ENCODE measurements at regions of chr18 and their contacts with region 1.

Region 1: DNA sequence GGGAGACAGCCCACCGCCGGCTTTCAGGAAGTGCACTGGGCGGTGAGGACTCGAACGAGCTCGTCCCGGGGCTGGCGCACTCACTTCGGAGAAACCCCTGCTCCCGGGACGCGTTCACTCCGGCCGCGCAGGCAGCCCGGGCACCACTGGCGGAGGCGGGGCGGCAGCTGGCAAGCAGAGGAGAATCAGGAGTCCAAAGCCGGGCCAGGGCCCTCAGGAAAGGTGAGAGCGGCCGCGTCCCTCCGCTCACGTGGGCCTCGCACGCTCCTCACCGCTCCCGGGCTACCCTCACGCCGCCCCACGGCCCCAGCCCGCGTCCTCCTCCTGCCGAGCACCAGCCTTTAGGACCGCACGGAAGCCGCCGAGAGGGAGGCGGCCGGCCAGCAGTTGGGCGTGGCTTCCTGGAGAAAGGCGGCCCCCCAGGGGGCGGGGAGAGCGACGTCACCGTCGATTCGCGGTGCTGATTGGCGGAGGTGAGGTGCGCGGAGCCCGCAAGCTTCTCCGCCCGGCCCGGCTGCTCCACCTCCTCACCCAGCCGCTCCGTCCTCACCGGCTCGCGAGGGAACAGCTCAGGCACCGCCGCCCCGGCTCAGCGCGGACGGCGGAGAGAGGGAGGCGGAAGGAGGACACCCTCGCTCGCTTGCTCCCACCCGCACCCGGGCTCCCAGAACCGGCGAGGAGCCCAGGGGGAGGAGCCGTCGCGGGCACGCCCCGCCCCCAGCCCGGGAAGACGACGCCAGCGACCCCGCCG is at the start of gene ZCCHC2:
- DNase-seq: peak; percentile 100
- H3K4me3 Mint-ChIP-seq: peak within 1 kb of the TSS; percentile 93
- H3K27ac Mint-ChIP-seq: peak within 1 kb of the TSS; percentile 94
- H3K4me1 Mint-ChIP-seq: peaks cover 21% of the 10 kb centered on the region
- H3K27me3 Mint-ChIP-seq: no peaks in the 10 kb centered on the region
- total RNA-seq, gene ZCCHC2: 47.0 and 52.8 TPM in 2 replicates

Region 2: GRCh38 chr18:61426492-61427053 is 1096.1 kb before region 1 on chr18:
- intact Hi-C with region 1: no loop called
- DNase-seq: no peak
- H3K4me3 Mint-ChIP-seq: no peak overlapping the region
- H3K27ac Mint-ChIP-seq: no peak overlapping the region
- H3K4me1 Mint-ChIP-seq: no peaks in the 10 kb centered on the region
- H3K27me3 Mint-ChIP-seq: no peaks in the 10 kb centered on the region

Region 3: GRCh38 chr18:62425465-62426195 is 97.0 kb before region 1 on chr18:
- intact Hi-C with region 1: loop called (anchors 1 kb)
- DNase-seq: peak; percentile 92
- H3K4me3 Mint-ChIP-seq: peak overlapping the region; percentile 62
- H3K27ac Mint-ChIP-seq: peak overlapping the region; percentile 84
- H3K4me1 Mint-ChIP-seq: peaks cover 37% of the 10 kb centered on the region
- H3K27me3 Mint-ChIP-seq: no peaks in the 10 kb centered on the region

Region 4: DNA sequence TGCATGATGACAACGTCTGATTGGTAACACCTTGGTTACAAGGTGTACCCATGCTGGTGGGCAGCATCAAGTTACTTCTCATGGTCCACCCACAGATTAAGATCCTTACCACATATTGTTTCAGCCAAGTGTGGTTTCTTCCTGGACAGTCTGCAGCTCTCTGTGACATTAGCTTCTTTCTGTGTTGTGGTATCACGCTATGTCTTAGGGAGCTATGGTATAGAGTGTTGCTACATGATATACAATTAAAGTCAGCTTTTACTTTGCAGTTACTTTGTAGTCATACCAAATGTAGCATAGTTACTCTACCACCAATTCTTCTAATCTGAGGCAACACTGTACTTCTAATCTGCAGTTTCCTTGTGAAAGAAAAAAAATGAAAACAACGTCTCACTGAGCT is 49.0 kb after region 1 on chr18:
- intact Hi-C with region 1: loop called (anchors 5 kb)
- DNase-seq: no peak
- H3K4me3 Mint-ChIP-seq: no peak overlapping the region
- H3K27ac Mint-ChIP-seq: peak overlapping the region; percentile 57
- H3K4me1 Mint-ChIP-seq: peaks cover 21% of the 10 kb centered on the region
- H3K27me3 Mint-ChIP-seq: no peaks in the 10 kb centered on the region

Region 5: DNA sequence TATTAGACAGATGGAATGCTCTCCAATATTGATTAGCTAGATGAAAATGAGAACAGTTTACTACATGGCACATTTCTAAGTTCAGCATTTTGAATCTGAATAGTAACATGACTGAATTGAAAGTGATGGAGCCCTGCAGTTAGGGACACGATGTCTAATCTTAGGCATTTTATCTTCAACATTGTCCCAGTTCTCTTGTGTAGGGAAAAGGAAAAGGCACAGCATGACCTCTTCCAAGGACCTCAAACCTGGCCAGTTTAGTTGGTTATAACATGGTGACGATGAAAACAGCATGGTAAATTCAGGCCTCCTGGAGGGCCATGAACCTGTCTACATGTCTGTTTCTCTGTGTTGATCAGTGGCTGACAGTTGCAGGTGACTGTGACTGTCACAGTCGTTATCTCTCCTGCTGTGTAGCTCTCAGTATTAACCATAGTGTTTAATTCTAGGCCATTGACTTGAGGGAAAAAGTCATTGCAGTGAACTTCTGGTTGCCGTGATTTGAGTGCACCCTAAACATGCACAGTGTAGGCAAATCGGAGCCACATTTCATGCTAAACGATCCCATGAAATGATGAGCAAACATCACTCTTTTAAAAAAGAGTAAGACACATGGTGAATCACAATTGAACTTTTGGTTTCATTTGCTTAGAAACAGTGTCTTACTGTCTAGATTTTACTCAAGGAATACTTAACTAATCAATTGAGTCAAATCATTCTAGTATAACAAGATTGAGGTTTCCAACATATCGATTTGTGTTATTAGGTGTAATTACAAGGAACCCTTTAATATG is 322.4 kb after region 1 on chr18:
- intact Hi-C with region 1: loop called (anchors 10 kb)
- DNase-seq: peak; percentile 72
- H3K4me3 Mint-ChIP-seq: peak overlapping the region; percentile 80
- H3K27ac Mint-ChIP-seq: peak overlapping the region; percentile 94
- H3K4me1 Mint-ChIP-seq: peaks cover 30% of the 10 kb centered on the region
- H3K27me3 Mint-ChIP-seq: no peaks in the 10 kb centered on the region

Region 6: GRCh38 chr18:63367053-63367953 is 844.6 kb after region 1 on chr18 and contains the start of gene KDSR:
- intact Hi-C with region 1: loop called (anchors 5 kb)
- DNase-seq: peak; percentile 96
- H3K4me3 Mint-ChIP-seq: peak within 1 kb of the TSS; percentile 91
- H3K27ac Mint-ChIP-seq: peak within 1 kb of the TSS; percentile 81
- H3K4me1 Mint-ChIP-seq: peaks cover 29% of the 10 kb centered on the region
- H3K27me3 Mint-ChIP-seq: no peaks in the 10 kb centered on the region
- total RNA-seq, gene KDSR: 83.9 and 86.9 TPM in 2 replicates

Measured in activated CD4-positive, alpha-beta T cell treated with anti-CD3 and anti-CD28 coated beads, Interleukin-2, amount 10 ng/mL, durations not matched to agents 24 days and 14 days (primary cell).